Sigmoid colon (tissue), 7 donors: ENCODE measurements at regions of chr11 and their contacts with region 1.

Region 1: GRCh38 chr11:72752088-72752914 is at the start of gene ARAP1:
- DNase-seq: peak; percentile 88
- H3K4me3 ChIP-seq: peak within 1 kb of the TSS; percentile 64 to 77 (median 70)
- H3K27ac ChIP-seq: peak within 1 kb of the TSS; percentile 20 to 68 (median 64)
- H3K4me1 ChIP-seq: peaks cover 0 to 41% (median 27%) of the 10 kb centered on the region in 4 donors
- H3K27me3 ChIP-seq: no peaks in the 10 kb centered on the region
- CTCF ChIP-seq: no peak
- EP300 ChIP-seq: no peak
- POLR2A ChIP-seq: no peak
- total RNA-seq, gene ARAP1: 56.5 to 135 (median 70.0) TPM

Region 2: GRCh38 chr11:72439455-72439854 is 312.8 kb before region 1 on chr11:
- intact Hi-C with region 1: no loop called
- DNase-seq: no peak
- H3K4me3 ChIP-seq: no peak overlapping the region
- H3K27ac ChIP-seq: no peak overlapping the region
- H3K4me1 ChIP-seq: peaks cover 0 to 3% (median 2%) of the 10 kb centered on the region in 4 donors
- H3K27me3 ChIP-seq: no peaks in the 10 kb centered on the region
- CTCF ChIP-seq: no peak
- EP300 ChIP-seq: no peak
- POLR2A ChIP-seq: no peak

Region 3: DNA sequence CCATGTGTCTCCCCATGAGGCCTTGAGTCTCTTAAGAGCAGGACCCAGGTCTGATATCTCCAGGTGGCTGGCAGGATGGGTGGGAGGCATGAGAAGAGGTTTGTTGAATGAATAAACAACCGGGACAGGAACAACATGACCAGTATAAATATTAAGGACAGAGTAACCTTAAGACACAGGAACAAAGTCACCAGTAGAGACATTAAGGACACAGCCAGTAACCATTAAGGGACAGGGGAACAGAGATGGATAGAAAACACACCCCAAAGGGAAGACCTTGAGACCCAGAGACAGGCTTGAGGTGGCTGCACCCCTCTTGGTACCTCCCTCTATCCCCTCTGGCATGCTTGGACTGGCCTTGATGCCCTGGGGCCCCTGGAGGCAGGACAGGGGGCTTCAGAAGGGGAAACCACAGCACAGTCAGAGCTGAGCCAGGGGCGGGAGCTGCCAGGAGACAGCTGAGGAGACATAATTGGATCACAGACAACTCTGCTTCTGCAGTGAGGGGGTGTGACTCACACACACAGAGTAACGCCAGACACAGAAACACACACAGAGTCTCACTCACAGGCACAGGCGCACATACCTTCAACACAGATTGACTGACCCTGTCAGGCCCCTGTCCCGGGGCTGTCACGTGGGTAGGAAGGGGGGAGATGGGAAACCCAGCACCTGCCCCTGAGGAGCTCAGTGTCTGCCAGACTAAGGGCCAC is 20.8 kb after region 1 on chr11:
- intact Hi-C with region 1: loop called (anchors 2 kb)
- DNase-seq: peak; percentile 88
- H3K4me3 ChIP-seq: no peak overlapping the region
- H3K27ac ChIP-seq: peak overlapping the region in 3 of 4 donors; percentile 46 to 76 (median 63)
- H3K4me1 ChIP-seq: peaks cover 0 to 42% (median 40%) of the 10 kb centered on the region in 4 donors
- H3K27me3 ChIP-seq: no peaks in the 10 kb centered on the region
- CTCF ChIP-seq: no peak
- EP300 ChIP-seq: no peak
- POLR2A ChIP-seq: no peak